H1 (cell line): ENCODE measurements at regions of chr1 and their contacts with region 1.

Region 1: DNA sequence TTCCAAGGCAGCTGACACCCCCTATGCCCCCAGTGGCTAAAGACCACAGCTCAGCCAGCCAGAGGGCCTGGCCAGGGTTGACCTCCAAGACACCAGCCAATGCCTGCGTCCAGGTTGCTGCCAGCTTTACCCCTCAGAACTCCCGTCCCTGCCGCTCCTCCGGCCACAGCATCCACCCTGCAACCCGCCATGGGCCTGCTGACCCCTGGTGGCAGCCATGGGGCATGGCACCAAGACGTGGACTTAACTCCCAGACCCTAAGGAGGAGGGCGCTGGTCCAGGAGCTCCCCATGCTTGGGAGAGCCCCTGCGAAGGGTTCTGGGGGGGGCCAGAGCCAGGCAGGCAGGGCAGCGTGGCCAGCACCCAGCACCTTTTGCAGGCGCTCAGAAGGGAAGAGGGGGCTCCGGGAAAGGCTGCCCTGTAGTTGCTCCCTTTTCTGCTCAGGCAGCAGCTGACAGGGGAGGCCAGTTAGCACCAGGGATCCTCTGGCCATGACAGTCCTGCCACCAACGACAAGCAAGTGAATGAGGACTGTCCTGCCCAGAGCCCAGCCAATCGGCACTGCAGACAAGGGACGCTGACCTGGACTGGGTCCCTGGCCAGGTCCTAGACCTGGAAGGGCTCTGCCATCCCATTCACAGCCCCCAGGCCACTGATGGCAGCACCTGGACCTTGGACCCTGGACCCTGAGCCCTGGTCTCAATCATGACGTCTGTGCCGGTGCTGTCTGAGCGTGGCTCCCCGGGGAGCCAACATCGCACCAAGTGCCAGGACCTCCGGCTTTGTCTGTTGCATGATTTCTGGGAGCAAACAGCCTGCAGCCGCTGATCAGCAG is 246.2 kb downstream of the NPHP4 start:
- DNase-seq: peak; percentile 70 to 92
- H3K4me3 ChIP-seq: no peak overlapping the region
- H3K27ac ChIP-seq: no peak overlapping the region
- H3K4me1 ChIP-seq: peaks cover 4 to 16% (median 10%) of the 10 kb centered on the region in 4 experiments
- H3K27me3 ChIP-seq: no peaks in the 10 kb centered on the region
- CTCF ChIP-seq: peak; percentile 97 to 99 (median 98)
- EP300 ChIP-seq: no peak; a peak in 1 of 3 replicates
- POLR2A ChIP-seq: no peak
- RAD21 ChIP-seq: peak; percentile 96 to 100

Region 2: DNA sequence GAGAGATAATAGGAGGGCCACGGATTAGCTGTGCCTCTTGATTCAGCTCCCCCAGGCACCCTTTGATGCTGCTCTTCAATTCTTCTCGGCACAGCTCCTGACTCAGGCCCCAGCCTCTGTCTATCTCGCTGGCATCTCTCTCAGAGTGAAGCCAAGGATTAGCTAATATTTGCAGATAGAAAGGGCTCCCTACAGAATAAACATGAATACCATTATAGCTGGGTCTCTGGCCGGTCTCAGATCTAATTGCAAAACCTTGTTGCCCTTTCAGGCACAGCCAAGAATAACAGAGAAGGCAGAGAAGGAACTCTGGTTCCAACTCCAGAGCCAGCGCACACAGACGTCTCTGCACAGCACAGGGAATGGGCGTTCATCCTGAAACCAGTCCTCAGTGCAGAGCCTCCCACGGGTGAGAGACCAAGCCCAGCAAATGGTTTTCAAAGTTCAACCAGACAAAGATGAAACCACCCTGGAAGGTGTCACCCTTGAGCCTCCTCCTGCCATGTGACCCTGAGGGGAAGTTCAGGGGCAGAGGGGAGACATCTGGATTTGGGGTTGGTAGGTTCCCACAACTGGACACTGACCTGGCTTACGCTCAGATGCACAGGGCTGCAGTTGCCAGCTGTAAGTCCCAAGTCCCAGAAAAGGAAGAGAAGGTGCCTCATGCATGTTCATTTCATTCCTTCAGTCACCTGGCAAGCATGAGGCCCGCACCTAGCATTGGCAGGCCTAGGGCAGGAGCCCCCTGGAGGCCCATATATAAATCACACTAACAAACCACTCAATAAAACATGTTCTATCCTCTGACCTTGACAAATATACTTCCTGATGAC is 147.8 kb before region 1 on chr1:
- CTCF ChIA-PET with region 1: interaction called, 10 read pairs
- POLR2A ChIA-PET with region 1: no interaction called
- DNase-seq: no peak
- H3K4me3 ChIP-seq: no peak overlapping the region
- H3K27ac ChIP-seq: no peak overlapping the region
- H3K4me1 ChIP-seq: peaks cover 0 to 3% (median 0%) of the 10 kb centered on the region in 4 experiments; a peak in 2 of 7 replicates
- H3K27me3 ChIP-seq: no peaks in the 10 kb centered on the region
- CTCF ChIP-seq: peak; percentile 32 to 44 (median 36)
- EP300 ChIP-seq: no peak
- POLR2A ChIP-seq: no peak
- RAD21 ChIP-seq: peak in 1 of 2 experiments; percentile 46; a peak in 3 of 4 replicates

Region 3: DNA sequence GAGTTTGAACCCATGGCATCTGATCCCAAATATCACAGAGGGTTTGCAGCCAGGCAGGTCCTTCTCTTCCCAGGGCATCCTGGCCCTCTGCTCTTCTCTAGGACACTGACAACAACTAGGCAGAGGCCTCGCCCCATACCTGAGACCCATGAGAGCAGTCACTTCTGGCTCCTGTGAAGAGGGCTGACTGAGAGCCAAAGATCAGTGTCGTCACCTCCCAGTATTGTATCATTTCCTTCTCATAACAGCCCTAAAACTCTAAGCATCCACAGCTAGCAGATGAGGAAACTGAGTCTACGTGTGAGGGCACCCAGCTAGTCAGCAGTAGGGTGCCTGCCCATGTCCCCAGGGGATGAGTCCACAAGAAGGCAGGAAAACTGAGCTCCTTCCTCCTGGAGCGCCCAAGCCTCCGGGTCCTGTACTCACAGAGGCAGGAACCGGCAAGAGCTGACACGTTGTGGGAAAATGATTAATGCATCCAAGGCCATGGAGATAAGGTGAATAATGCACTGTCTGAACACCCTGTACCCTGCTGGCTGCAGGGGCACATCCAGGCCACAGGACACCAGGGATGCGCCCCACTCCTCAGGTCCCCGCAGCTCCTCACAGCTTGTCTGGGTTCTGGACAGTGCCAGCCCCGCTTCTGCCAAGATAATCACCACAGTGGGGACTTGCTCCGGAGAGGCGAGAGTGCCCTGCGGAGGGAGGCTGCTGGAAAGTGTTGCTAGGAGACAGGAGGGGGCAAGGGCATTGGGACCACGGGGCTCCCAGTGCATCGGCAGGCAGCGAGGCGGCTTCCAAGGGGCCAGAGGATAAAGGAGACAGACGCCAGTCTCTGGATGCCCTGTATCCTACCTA is 93.8 kb before region 1 on chr1:
- CTCF ChIA-PET with region 1: interaction called, 12 read pairs
- POLR2A ChIA-PET with region 1: no interaction called
- DNase-seq: no peak
- H3K4me3 ChIP-seq: 0 out of 8 replicates have a peak overlapping the region, but pooled peaks of 1 of the 4 experiments have one; percentile 9
- H3K27ac ChIP-seq: no peak overlapping the region
- H3K4me1 ChIP-seq: peaks cover 0 to 5% (median 2%) of the 10 kb centered on the region in 4 experiments; a peak in 3 of 7 replicates
- H3K27me3 ChIP-seq: peaks cover 0 to 4% (median 0%) of the 10 kb centered on the region in 4 experiments; a peak in 1 of 7 replicates
- CTCF ChIP-seq: no peak
- EP300 ChIP-seq: no peak
- POLR2A ChIP-seq: no peak
- RAD21 ChIP-seq: no peak

Region 4: GRCh38 chr1:5727871-5728643 is 17.9 kb before region 1 on chr1:
- CTCF ChIA-PET with region 1: interaction called, 40 read pairs
- POLR2A ChIA-PET with region 1: no interaction called
- DNase-seq: no peak
- H3K4me3 ChIP-seq: no peak overlapping the region
- H3K27ac ChIP-seq: no peak overlapping the region
- H3K4me1 ChIP-seq: peaks cover 0 to 2% (median 0%) of the 10 kb centered on the region in 4 experiments; a peak in 1 of 7 replicates
- H3K27me3 ChIP-seq: no peaks in the 10 kb centered on the region; a peak in 1 of 7 replicates
- CTCF ChIP-seq: no peak
- EP300 ChIP-seq: no peak
- POLR2A ChIP-seq: no peak
- RAD21 ChIP-seq: no peak

Region 5: GRCh38 chr1:5765997-5766906 is 20.3 kb after region 1 on chr1:
- CTCF ChIA-PET with region 1: interaction called, 12 read pairs
- POLR2A ChIA-PET with region 1: interaction called, 5 read pairs
- DNase-seq: no peak
- H3K4me3 ChIP-seq: peak overlapping the region in 1 of 4 experiments; percentile 33; a peak in 1 of 8 replicates
- H3K27ac ChIP-seq: peak overlapping the region; percentile 51; the same call in 1 of the 2 replicates
- H3K4me1 ChIP-seq: peaks cover 8 to 25% (median 19%) of the 10 kb centered on the region in 4 experiments
- H3K27me3 ChIP-seq: peaks cover 0 to 3% (median 0%) of the 10 kb centered on the region in 4 experiments; a peak in 3 of 7 replicates
- CTCF ChIP-seq: no peak
- EP300 ChIP-seq: no peak
- POLR2A ChIP-seq: 0 out of 3 replicates have a peak, but pooled peaks of 1 of the 2 experiments have one; percentile 31
- RAD21 ChIP-seq: no peak